ENCODE measurements at regions of chr12 and their contacts with region 1.

Region 1: DNA sequence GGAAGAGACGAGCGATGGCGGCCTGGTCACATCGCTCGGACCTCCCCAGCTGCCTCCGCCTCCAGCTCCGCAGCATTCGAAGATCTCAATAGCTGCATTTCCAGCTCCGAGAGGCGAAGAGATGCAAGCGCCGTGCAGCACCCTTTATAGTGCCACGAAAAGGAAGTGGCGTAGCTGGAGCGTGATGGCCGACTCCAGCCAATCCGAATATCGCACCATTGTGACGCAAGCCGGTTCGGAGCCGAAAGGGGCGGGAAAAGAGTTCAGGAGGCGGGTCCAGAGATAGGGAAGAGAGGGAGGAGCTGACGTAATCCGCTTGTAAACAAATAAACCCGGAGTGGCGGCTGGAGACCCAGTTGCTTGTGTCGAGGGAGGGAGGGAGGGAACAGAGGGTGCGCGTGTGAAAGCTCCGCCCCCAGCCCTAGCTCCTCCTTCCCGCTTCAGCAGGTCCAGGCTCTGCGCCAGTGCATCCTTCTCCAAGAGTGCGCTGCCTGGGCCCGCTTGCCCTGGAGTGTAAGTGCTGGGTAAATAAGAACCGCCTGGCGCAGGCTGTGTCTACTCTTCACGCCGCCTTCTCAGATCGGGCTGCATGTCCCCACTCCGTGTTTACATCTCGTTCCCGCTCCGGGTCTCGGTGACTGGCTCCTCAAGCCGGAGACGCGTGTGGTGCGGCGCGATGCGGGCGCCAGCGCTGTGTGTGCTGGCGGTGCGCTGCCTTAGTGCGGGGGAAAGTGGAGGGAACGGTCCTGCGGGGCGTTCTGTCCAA is at the start of gene BTG1:
- DNase-seq: peak; percentile 100
- H3K4me3 ChIP-seq: peak within 1 kb of the TSS; percentile 53 to 86 (median 85)
- H3K27ac ChIP-seq: peak within 1 kb of the TSS; percentile 80
- H3K4me1 ChIP-seq: peaks cover 19% of the 10 kb centered on the region
- H3K27me3 ChIP-seq: no peaks in the 10 kb centered on the region
- CTCF ChIP-seq: peak in 1 of 2 donors; percentile 1
- POLR2A ChIP-seq: peak; percentile 100
- total RNA-seq, gene BTG1: 89.5 and 104 TPM in 2 replicates

Region 2: DNA sequence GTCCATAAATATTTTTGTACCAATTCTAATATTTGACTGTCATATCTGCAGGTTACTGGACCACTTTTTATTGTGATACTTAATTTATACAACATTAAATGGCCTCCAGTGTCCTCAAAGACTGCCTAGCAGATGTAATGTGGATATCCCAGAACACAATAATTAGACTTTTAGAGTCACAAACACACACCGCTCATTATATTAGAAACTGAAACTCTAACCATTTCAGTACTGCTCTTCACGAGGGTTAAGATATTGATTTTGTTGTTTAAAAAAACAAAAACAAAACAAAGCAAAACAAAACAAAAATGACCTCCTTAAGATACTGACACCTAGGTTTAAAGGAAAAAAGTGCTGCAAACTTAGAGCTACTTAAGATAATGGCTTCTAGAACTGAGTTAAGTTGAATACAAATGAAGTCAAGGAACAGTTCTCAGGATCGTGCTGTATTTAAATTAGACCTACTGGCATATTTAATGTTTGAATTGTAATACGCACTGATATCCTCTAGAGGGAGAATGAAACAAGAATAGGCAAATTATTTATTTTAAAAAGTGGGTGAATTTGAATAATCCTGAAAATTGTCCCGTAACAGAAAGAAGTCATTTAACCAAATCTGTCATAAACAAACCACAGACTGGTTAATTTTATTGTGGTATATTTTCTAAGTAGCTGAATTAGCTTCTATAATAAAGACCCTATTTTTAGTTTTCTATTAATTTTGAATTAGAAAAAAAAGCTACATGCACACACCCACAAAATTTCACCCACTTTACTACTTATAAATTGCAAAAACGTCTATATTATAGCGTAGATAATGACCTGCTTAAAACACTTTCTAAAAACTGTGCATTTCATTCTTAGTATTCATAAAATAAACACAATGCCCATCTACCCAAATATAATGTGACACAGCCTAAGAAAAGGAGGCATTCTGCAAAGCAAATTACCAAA is 568.1 kb before region 1 on chr12:
- CTCF ChIA-PET with region 1: interaction called, 37 read pairs
- POLR2A ChIA-PET with region 1: interaction called, 4 read pairs
- dilution Hi-C with region 1: no loop called
- intact Hi-C with region 1: loop called (anchors 2 kb)
- DNase-seq: peak; percentile 61
- H3K4me3 ChIP-seq: peak overlapping the region in 1 of 3 experiments; percentile 73
- H3K27ac ChIP-seq: no peak overlapping the region
- H3K4me1 ChIP-seq: peaks cover 4% of the 10 kb centered on the region
- H3K27me3 ChIP-seq: no peaks in the 10 kb centered on the region
- CTCF ChIP-seq: peak; percentile 20 to 21
- POLR2A ChIP-seq: no peak

Region 3: DNA sequence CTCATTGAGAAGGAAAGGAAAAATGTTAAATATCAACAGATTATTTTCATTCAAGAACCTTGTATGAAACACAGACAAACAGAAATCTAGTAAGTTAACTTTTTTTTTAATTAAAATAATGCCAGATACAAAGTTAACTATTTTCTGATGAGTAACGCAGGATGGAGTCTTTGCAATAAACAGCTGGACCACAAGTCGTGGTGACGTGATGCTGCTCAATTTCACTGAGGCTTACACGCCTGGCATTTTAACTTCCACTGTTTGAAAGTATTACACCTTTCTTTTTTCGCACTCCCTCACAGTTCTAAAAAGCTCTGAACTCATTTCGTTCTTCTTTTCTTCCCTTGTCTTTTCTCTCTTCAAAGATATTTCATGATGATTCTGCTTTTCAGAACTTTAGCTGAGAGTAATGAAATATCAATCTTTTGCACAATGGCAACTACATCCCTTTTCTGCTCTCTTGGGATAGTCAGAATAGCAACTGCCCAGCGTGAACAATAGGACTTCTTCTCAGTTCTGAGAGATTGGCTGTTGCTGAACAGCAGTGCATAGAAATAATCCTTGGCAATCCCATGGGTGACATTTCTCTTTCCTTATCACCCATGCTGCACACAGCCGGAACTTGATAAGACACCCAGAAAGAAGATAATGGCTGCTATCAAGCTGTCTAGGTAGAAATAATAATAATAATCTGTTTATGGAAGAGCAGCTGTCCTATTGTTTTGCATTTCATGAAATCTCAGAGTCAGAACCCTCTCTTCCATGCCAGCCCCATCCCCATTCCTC is 160.7 kb before region 1 on chr12:
- CTCF ChIA-PET with region 1: interaction called, 7 read pairs
- POLR2A ChIA-PET with region 1: interaction called, 19 read pairs
- dilution Hi-C with region 1: no loop called
- intact Hi-C with region 1: loop called (anchors 1 kb)
- DNase-seq: peak; percentile 13
- H3K4me3 ChIP-seq: no peak overlapping the region
- H3K27ac ChIP-seq: no peak overlapping the region
- H3K4me1 ChIP-seq: peaks cover 55% of the 10 kb centered on the region
- H3K27me3 ChIP-seq: no peaks in the 10 kb centered on the region
- CTCF ChIP-seq: no peak
- POLR2A ChIP-seq: no peak

Region 4: DNA sequence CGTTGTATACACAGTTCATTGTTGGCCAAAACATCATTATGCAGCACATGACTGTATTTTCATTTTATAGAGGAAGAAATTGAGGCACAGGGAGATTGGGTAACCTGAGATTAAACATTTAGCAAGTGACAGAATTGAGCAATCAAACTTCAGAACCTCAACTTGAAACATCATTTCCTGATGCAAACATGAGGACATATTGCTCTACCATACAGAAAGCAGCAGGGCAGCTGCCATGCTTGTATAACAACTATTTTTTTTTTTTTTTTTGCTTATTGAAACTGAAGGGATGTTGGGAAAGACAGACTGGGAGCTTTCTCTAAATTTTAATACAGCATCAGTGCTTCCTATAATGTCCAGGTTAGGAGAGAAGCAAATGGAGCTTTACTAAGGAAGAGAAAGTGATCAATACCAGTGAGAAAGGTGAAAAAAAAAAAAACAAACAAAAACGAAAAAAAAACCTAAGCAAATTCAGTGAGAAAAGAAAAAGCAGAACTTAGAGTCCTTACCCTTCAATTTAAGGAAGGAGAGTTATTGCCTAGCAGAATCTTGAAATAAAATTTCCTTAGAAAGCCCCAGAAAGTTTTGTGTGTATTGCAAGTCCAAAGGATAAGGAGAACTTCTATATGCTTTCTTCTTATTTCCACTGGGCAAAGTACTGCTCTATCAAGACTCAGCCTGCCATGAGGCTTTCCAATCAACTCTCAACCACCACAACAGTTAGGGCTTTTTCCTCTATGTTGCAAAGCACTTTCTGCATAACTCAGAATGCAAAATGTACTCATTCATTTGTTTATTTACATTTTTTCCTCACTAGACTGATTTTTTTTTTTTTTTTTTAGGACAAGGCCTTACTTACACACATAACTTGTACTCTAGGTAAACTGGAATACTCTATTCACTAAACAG is 21.9 kb before region 1 on chr12:
- CTCF ChIA-PET with region 1: no interaction called
- POLR2A ChIA-PET with region 1: no interaction called
- dilution Hi-C with region 1: no loop called
- intact Hi-C with region 1: no loop called
- DNase-seq: no peak
- H3K4me3 ChIP-seq: no peak overlapping the region
- H3K27ac ChIP-seq: no peak overlapping the region
- H3K4me1 ChIP-seq: no peaks in the 10 kb centered on the region
- H3K27me3 ChIP-seq: no peaks in the 10 kb centered on the region
- CTCF ChIP-seq: no peak
- POLR2A ChIP-seq: no peak

Region 5: DNA sequence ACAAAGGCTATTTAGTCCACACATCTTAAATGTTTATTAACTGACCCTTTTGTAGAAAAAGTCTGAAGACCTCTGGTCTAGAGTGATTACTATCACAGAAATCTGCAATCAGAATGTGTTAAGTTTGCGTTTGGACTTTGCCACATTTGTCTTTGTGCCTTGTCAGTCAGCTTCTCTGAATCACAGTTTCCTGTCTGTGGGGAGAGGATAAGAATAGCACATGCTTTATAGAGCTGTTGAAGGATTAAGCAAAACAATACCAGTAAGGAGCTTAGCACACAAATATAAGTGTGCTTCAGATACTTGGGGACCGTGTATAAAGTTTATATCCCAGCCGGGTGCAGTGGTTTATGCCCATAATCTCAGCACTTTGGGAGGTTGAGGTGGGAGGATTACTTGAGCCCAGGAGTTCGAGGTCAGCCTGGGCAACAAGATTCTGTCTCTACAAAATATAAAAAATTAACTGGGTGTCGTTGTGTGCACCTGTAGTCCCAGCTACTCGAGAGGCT is 62.8 kb after region 1 on chr12:
- CTCF ChIA-PET with region 1: interaction called, 3 read pairs
- POLR2A ChIA-PET with region 1: interaction called, 20 read pairs
- dilution Hi-C with region 1: no loop called
- intact Hi-C with region 1: loop called (anchors 1 kb)
- DNase-seq: peak; percentile 97
- H3K4me3 ChIP-seq: peak overlapping the region in 1 of 3 experiments; percentile 47
- H3K27ac ChIP-seq: peak overlapping the region; percentile 82
- H3K4me1 ChIP-seq: peaks cover 13% of the 10 kb centered on the region
- H3K27me3 ChIP-seq: no peaks in the 10 kb centered on the region
- CTCF ChIP-seq: no peak
- POLR2A ChIP-seq: no peak

Region 6: GRCh38 chr12:92408072-92408900 is 262.4 kb after region 1 on chr12:
- CTCF ChIA-PET with region 1: interaction called, 6 read pairs
- POLR2A ChIA-PET with region 1: interaction called, 3 read pairs
- dilution Hi-C with region 1: no loop called
- intact Hi-C with region 1: loop called (anchors 1 kb)
- DNase-seq: peak; percentile 50
- H3K4me3 ChIP-seq: no peak overlapping the region
- H3K27ac ChIP-seq: no peak overlapping the region
- H3K4me1 ChIP-seq: peaks cover 16% of the 10 kb centered on the region
- H3K27me3 ChIP-seq: peaks cover 4 to 5% of the 10 kb centered on the region in 2 experiments
- CTCF ChIP-seq: peak; percentile 28 to 45
- POLR2A ChIP-seq: no peak

Region 7: GRCh38 chr12:92570056-92570753 is 424.3 kb after region 1 on chr12:
- CTCF ChIA-PET with region 1: interaction called, 51 read pairs
- POLR2A ChIA-PET with region 1: interaction called, 22 read pairs
- dilution Hi-C with region 1: no loop called
- intact Hi-C with region 1: loop called (anchors 1 kb)
- DNase-seq: peak; percentile 87
- H3K4me3 ChIP-seq: no peak overlapping the region
- H3K27ac ChIP-seq: no peak overlapping the region
- H3K4me1 ChIP-seq: no peaks in the 10 kb centered on the region
- H3K27me3 ChIP-seq: no peaks in the 10 kb centered on the region
- CTCF ChIP-seq: peak; percentile 43 to 45
- POLR2A ChIP-seq: no peak